ENCODE measurements at regions of chr14 and their contacts with region 1.

Region 1: GRCh38 chr14:55339770-55340169 is 68.5 kb downstream of the FBXO34 start:
- DNase-seq: no peak
- H3K4me3 Mint-ChIP-seq: no peak overlapping the region
- H3K27ac Mint-ChIP-seq: no peak overlapping the region
- H3K4me1 Mint-ChIP-seq: peaks cover 53% of the 10 kb centered on the region
- H3K27me3 Mint-ChIP-seq: no peaks in the 10 kb centered on the region
- CTCF ChIP-seq: no peak

Region 2: DNA sequence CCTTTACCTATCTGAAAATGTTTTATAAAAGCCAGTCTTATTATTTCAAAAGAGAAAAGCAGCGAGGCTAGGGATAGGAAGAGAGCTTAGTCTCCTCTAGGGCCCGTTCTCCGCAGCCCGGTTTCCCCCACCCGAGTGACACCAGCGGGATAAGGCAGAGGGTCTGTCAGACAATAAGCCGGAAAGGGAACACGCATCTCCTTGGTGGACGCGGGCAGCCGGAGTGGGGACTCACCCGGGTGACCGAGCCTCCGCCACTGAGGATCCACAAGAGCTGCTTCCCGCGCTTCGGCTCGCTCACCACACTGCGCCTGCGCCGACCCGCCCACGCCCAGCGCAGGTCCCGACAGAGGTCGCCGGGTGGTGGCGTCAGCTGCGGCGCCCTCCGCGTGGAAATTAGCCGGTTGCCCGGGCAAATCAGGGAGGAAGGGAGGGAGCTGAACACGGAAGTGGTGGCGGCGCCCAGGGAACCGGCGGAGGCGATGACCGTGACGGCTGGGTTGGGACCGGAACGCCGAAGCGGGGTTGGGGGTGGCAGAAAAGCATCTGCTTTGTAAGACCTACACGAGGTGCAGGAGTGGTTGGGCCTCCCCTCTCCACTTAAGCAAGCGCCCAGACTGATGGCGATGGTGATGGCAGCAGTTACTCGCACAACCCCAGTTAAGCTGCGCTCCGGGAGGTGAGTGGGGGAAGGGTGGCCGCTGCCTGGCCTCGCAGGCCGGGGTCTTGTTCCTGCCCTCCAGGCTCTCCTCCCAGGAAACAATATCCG is 312.8 kb before region 1 on chr14 and contains the starts of genes SOCS4 and WDHD1:
- CTCF ChIA-PET with region 1: no interaction called
- intact Hi-C with region 1: no loop called
- DNase-seq: peak; percentile 97
- H3K4me3 Mint-ChIP-seq: peak within 1 kb of the TSS; percentile 89
- H3K27ac Mint-ChIP-seq: peak within 1 kb of the TSS; percentile 23
- H3K4me1 Mint-ChIP-seq: peaks cover 32% of the 10 kb centered on the region
- H3K27me3 Mint-ChIP-seq: no peaks in the 10 kb centered on the region
- CTCF ChIP-seq: no peak
- total RNA-seq, gene SOCS4: 29.9 and 31.5 TPM in 2 replicates
- total RNA-seq, gene WDHD1: 25.0 and 27.7 TPM in 2 replicates

Region 3: DNA sequence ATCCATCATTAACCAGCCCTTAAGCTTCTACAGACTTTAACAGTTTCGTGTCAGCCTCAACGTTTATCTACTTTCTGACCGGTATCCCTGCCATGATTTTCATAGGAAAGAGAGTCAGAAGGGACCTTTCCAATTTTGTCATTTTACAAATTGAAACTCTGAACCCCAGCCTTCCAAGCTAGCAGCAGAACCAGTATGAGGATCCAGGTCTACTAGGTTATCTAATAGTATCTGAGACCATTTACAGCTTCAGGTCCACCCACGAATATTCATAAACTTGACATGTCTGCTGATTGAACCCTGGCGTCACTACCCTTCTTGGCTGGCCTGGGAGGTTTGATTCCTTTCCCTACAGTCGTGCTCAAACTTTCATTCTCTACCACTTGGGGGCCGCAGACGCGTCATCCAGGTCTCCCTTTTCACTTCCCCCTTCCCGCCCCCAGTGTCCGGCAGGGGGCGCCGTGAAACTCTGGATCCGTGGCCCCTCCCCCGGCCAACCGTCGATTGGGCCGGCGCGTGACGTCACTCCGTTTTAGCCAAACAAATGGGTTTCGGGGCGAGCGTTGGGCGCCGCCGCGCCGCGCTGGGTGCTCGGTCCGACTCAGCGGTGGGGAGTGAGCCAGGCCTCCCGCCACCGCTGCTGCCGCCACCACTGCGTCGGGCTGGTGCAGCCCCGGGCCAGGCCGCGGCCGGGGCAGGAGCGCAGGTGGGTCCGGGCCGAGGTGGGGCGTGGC is 68.8 kb before region 1 on chr14 and contains the start of gene FBXO34:
- CTCF ChIA-PET with region 1: no interaction called
- intact Hi-C with region 1: loop called (anchors 5 kb)
- DNase-seq: peak; percentile 98
- H3K4me3 Mint-ChIP-seq: peak within 1 kb of the TSS; percentile 78
- H3K27ac Mint-ChIP-seq: peak within 1 kb of the TSS; percentile 81
- H3K4me1 Mint-ChIP-seq: peaks cover 28% of the 10 kb centered on the region
- H3K27me3 Mint-ChIP-seq: no peaks in the 10 kb centered on the region
- CTCF ChIP-seq: peak; percentile 98
- total RNA-seq, gene FBXO34: 30.0 and 34.5 TPM in 2 replicates

Measured in Calu3 (cell line).